ENCODE measurements at regions of chr7 and their contacts with region 1.

Region 1: DNA sequence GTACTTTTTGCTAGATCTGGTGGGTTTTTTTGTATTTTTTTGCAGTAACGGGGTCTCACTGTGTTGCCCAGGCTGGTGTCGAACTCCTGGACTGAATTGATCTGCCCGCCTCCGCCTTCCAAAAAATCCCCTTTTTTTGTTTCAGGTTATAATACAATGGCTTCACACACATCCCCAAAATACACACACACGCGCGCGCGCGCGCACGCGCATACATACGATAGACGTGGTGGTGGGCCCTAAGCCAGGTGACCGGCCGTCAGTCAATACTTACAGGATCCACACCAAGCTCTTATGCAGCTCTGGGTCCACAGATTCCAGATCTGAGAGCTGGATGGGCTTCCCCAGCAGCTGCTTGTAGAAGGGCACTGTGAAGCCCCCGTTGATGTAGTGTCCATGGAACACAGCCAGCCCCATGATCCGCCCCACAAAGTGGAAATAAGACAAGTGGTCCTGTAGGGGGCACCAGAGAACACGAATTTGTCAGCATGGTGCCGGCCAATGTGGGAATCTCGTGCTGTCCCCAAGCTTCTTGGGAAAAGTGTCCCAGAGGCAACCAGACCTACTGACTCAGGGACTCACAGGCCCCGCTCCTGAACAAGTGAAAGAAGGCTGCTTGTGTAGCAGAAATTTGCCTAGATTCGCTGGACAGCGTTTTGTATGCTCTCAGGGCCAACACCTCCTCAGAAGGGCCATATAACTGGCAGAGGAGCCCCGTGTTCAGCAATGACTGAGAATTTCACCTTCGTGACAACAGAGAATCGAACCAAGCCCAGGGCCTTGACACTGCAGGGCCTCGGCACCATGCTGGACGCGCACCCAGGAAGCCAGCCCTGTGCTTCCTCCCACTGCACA is 103.6 kb downstream of the SMURF1 start:
- DNase-seq: peak; percentile 73
- ATAC-seq: peak; percentile 90
- H3K4me3 ChIP-seq: no peak overlapping the region
- H3K27ac ChIP-seq: peak overlapping the region; percentile 58
- H3K4me1 ChIP-seq: peaks cover 5% of the 10 kb centered on the region
- H3K27me3 ChIP-seq: no peaks in the 10 kb centered on the region
- CTCF ChIP-seq: peak; percentile 70

Region 2: DNA sequence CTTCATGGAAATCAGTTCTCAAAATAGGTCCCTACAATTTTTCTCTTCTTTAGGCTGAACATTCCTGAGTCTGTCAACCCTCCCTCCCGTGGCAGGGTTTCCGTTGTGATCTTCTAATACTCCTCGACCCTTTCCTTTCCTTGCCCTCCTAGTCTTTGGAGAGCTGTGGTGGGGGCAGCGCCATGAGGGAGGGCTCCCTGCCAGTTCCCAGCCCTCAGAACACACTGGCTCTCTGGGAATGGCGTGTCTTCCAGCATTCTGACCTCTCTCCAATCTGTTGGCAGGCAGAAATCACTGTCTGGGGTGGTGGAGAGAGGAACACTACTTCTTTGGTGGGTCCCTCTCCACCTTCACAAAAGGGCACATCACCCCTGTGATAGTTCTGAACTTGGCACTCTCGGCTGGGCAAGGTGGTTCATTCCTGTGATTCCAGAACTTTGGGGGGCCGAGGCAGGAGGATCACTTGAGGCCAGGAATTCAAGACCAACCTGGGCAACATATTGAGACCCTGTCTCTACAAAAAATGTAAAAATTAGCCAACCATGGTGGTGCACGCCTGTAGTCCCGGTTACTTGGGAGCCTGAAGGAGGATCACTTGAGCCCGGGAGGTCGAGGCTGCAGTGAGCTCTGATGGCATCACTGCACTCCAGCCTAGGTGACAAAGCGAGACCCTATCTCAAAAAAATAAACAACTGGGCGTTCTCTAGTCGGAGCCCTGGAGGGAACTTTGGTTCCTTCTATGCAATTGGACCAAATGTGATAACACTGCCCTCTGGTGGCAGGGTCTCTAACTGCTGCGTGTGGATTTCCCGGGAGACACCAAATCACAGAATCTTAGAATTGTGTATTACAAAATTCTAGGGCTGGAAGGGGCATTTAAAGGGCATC is 272.2 kb after region 1 on chr7:
- intact Hi-C with region 1: loop called (anchors 5 kb)
- DNase-seq: no peak
- ATAC-seq: peak; percentile 93
- H3K4me3 ChIP-seq: no peak overlapping the region
- H3K27ac ChIP-seq: no peak overlapping the region
- H3K4me1 ChIP-seq: peaks cover 3% of the 10 kb centered on the region
- H3K27me3 ChIP-seq: no peaks in the 10 kb centered on the region
- CTCF ChIP-seq: peak; percentile 93